Naive thymus-derived CD4-positive, alpha-beta T cell (primary cell): ENCODE measurements at regions of chr3 and their contacts with region 1.

Region 1: DNA sequence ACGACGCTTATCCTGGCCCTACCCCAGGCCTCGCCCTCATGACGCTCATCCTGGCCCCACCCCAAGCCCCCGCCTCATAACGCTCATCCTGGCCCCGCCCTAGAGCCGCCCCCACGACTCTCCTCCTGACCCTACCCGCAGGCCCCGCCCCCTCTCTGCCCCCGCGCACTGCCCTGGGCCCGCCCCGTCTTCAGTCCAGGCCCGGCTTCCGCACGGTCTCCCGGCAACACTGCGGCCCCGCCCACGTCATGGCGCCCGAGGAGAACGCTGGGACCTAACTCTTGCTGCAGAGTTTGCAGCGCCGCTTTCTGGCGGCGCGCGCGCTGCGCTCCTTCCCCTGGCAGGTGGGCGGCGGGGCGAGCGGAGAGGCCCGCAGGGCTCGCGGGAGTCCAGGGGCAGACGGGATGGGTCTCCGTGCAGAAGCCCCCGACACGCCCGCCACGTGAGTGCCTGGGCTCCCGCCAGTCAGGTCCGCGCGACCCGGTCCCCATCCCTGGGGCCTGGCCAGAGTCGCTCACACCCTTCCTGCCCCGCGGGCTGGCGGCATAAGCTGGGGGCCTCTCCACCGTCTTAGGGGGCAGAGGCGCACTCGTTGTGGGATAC is 52.5 kb upstream of the ROPN1B start:
- DNase-seq: peak in 6 of 9 donors; percentile 91 to 96 (median 94)
- ATAC-seq: peak; percentile 98
- H3K4me3 ChIP-seq: peak overlapping the region; percentile 75
- H3K4me3 Mint-ChIP-seq: peak overlapping the region; percentile 82 to 94 (median 91)
- H3K27ac ChIP-seq: peak overlapping the region; percentile 83
- H3K27ac Mint-ChIP-seq: peak overlapping the region; percentile 86 to 99 (median 94)
- H3K4me1 ChIP-seq: no peaks in the 10 kb centered on the region
- H3K4me1 Mint-ChIP-seq: peaks cover 6 to 18% (median 13%) of the 10 kb centered on the region in 7 donors
- H3K27me3 ChIP-seq: no peaks in the 10 kb centered on the region
- H3K27me3 Mint-ChIP-seq: no peaks in the 10 kb centered on the region

Region 2: DNA sequence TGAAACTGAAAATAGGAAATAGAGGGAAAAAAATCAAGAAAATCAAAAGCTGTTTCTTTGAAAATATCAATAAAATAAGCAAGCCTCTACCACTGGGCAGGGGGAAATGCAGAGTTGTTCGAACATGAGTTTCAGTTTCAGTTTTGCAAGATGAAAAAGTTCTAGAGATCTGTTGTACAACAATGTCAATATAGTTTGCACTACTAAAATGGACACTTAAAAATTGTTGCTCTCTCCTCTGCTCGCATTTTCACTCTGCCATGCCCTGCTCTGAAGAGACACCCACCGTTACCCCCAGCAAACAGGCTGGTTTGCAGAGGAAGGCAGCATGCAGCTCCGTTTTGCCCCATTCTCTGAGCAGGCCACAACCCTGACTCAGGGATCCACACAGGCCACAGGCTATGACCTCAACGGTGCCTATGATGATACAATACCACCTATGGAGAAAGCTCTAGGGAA is 605.8 kb before region 1 on chr3:
- CTCF ChIA-PET with region 1: no interaction called
- POLR2A ChIA-PET with region 1: no interaction called
- intact Hi-C with region 1: loop called in 1 of 2 experiments (anchors 5 kb)
- DNase-seq: peak; percentile 15 to 51 (median 41)
- ATAC-seq: peak; percentile 92
- H3K4me3 ChIP-seq: peak overlapping the region; percentile 52
- H3K4me3 Mint-ChIP-seq: peak overlapping the region; percentile 78 to 99 (median 94)
- H3K27ac ChIP-seq: peak overlapping the region; percentile 62
- H3K27ac Mint-ChIP-seq: peak overlapping the region; percentile 40 to 97 (median 90)
- H3K4me1 ChIP-seq: peaks cover 0 to 17% of the 10 kb centered on the region in 2 donors
- H3K4me1 Mint-ChIP-seq: peaks cover 28 to 82% (median 65%) of the 10 kb centered on the region in 7 donors
- H3K27me3 ChIP-seq: no peaks in the 10 kb centered on the region
- H3K27me3 Mint-ChIP-seq: no peaks in the 10 kb centered on the region

Region 3: DNA sequence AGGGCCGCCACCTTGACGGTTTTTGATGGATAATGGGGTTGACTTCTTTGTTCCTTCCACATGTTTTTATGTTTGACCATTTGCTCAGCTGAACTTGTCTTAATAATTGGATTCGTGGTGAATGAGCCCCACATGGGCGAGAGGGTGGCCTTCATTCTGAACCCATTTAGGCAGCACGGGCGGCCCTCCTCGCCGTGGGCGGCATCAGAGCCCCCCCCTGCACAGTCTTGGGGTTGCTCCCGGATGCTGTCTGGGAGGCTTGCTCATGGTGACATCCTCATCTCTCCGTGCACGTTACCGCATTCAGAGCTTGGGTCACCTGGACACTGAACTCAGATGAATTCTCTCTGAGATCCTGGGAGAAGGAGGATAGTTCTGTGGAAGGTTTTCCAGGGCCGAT is 148.8 kb before region 1 on chr3:
- CTCF ChIA-PET with region 1: no interaction called
- POLR2A ChIA-PET with region 1: no interaction called
- intact Hi-C with region 1: loop called (anchors 1 to 5 kb)
- DNase-seq: no peak
- ATAC-seq: no peak
- H3K4me3 ChIP-seq: no peak overlapping the region
- H3K4me3 Mint-ChIP-seq: peak overlapping the region; percentile 55 to 83 (median 73)
- H3K27ac ChIP-seq: no peak overlapping the region
- H3K27ac Mint-ChIP-seq: peak overlapping the region in 1 of 9 donors; percentile 21
- H3K4me1 ChIP-seq: no peaks in the 10 kb centered on the region
- H3K4me1 Mint-ChIP-seq: peaks cover 0 to 10% (median 5%) of the 10 kb centered on the region in 7 donors
- H3K27me3 ChIP-seq: no peaks in the 10 kb centered on the region
- H3K27me3 Mint-ChIP-seq: peaks cover 16 to 35% (median 21%) of the 10 kb centered on the region in 5 donors

Region 4: DNA sequence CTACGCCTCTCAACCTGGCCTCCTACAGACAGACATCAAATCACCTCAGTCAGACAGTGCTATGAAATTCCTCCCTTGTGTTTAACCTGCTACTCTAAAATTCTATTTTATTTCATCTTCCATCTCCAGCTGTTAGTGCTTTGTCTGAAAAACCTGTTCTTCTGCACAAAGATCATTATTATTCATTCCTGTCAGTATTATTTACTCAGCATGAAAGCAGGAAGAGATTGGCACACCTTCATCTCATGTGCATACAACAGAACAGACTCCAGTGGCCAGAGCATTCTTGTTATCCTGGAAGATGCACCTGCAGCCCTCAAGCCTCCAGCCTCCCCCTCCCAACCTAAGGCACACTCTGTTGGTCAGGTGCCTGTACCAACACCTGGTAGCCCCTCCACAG is 50.7 kb after region 1 on chr3:
- CTCF ChIA-PET with region 1: no interaction called
- POLR2A ChIA-PET with region 1: no interaction called
- intact Hi-C with region 1: no loop called
- DNase-seq: no peak
- ATAC-seq: no peak
- H3K4me3 ChIP-seq: no peak overlapping the region
- H3K4me3 Mint-ChIP-seq: no peak overlapping the region
- H3K27ac ChIP-seq: no peak overlapping the region
- H3K27ac Mint-ChIP-seq: no peak overlapping the region
- H3K4me1 ChIP-seq: peaks cover 2 to 5% of the 10 kb centered on the region in 2 donors
- H3K4me1 Mint-ChIP-seq: peaks cover 0 to 4% (median 4%) of the 10 kb centered on the region in 7 donors
- H3K27me3 ChIP-seq: peaks cover 3 to 6% of the 10 kb centered on the region in 2 donors
- H3K27me3 Mint-ChIP-seq: peaks cover 16 to 24% (median 22%) of the 10 kb centered on the region in 5 donors

Region 5: GRCh38 chr3:126197854-126198584 is 281.5 kb after region 1 on chr3:
- CTCF ChIA-PET with region 1: no interaction called
- POLR2A ChIA-PET with region 1: no interaction called
- intact Hi-C with region 1: loop called in 1 of 2 experiments (anchors 5 kb)
- DNase-seq: peak in 6 of 9 donors; percentile 1 to 34 (median 20)
- ATAC-seq: peak; percentile 73
- H3K4me3 ChIP-seq: no peak overlapping the region
- H3K4me3 Mint-ChIP-seq: no peak overlapping the region
- H3K27ac ChIP-seq: no peak overlapping the region
- H3K27ac Mint-ChIP-seq: no peak overlapping the region
- H3K4me1 ChIP-seq: no peaks in the 10 kb centered on the region
- H3K4me1 Mint-ChIP-seq: no peaks in the 10 kb centered on the region
- H3K27me3 ChIP-seq: no peaks in the 10 kb centered on the region
- H3K27me3 Mint-ChIP-seq: peaks cover 9 to 27% (median 15%) of the 10 kb centered on the region in 5 donors

Region 6: DNA sequence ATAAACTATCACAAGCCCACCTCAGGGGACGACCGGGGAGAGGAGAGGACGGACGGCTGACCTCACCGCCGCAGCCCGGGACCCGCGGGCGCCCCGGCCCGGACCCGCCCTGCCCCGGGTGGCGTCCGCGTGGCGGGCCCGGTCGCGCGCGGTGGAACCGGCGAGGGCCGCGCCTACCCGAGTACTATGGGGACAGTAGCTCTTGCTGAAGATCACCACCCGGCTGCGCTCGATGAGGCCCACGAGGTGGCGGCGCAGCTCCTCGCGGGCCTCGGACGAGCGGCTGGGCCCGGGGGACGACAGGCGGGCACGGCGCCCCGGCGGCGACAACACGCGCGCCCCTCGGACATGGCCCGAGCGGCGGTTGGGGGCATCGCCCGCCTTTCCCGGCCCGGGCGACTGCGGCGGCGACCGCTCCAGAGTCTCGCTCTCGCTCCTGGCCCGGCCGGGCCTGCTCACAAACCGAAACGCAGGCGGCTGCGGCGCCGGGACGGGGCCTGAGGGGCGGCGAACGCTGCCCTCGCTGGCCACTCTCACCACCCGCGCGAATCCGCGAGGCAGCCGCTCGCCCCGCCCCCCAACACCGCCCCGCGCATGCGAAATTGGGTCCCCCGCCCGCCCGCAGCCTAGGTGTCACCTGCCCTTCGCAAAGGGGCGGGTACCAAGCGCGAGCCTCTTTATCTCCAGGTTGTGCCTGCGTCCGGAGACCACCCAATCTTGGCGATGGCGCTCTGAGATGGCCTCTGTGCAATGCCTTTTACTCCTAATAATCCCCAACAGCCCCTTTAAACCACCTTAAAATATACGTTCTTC is 738.3 kb after region 1 on chr3 and contains the start of gene TXNRD3:
- CTCF ChIA-PET with region 1: no interaction called
- POLR2A ChIA-PET with region 1: no interaction called
- intact Hi-C with region 1: loop called in 1 of 2 experiments (anchors 2 kb)
- DNase-seq: peak; percentile 52 to 76 (median 71)
- ATAC-seq: peak; percentile 93
- H3K4me3 ChIP-seq: peak within 1 kb of the TSS; percentile 46
- H3K4me3 Mint-ChIP-seq: peak within 1 kb of the TSS; percentile 83 to 93 (median 89)
- H3K27ac ChIP-seq: peak within 1 kb of the TSS; percentile 51
- H3K27ac Mint-ChIP-seq: peak within 1 kb of the TSS in 7 of 9 donors; percentile 18 to 91 (median 51)
- H3K4me1 ChIP-seq: peaks cover 0 to 3% of the 10 kb centered on the region in 2 donors
- H3K4me1 Mint-ChIP-seq: peaks cover 4 to 19% (median 10%) of the 10 kb centered on the region in 7 donors
- H3K27me3 ChIP-seq: peaks cover 0 to 4% of the 10 kb centered on the region in 2 donors
- H3K27me3 Mint-ChIP-seq: peaks cover 0 to 51% (median 4%) of the 10 kb centered on the region in 5 donors
- total RNA-seq, gene TXNRD3: 0.46 to 4.8 (median 3.2) TPM

Region 7: DNA sequence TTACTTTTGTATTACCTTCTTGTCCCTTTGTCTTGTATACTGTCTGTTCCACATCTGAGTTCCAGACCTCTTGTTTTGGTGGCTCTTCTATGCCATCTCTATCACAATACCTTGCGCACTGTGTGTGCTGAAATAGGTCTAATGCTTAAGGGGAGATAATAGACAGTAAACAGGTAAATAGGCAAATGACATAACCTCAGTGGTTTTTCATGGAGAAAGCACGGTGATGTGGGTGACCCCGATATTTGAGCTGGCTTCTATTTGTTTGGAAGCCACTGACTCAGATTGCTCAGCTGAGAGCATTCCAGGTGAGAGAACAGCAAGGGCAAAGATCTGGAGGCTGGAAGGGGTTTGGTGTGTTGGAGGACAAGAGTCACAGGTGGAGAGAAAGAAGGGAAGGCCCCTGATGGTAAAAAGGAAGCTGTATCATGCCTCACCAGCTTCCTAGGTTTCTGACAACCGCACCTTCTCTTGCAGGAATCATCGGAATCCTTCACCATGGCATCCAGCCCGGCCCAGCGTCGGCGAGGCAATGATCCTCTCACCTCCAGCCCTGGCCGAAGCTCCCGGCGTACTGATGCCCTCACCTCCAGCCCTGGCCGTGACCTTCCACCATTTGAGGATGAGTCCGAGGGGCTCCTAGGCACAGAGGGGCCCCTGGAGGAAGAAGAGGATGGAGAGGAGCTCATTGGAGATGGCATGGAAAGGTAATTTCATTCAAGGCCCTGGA is 1682.5 kb after region 1 on chr3:
- CTCF ChIA-PET with region 1: no interaction called
- POLR2A ChIA-PET with region 1: no interaction called
- intact Hi-C with region 1: loop called in 1 of 2 experiments (anchors 5 kb)
- DNase-seq: no peak
- ATAC-seq: no peak
- H3K4me3 ChIP-seq: peak overlapping the region; percentile 75
- H3K4me3 Mint-ChIP-seq: peak overlapping the region; percentile 62 to 89 (median 82)
- H3K27ac ChIP-seq: peak overlapping the region; percentile 70
- H3K27ac Mint-ChIP-seq: peak overlapping the region; percentile 57 to 93 (median 86)
- H3K4me1 ChIP-seq: peaks cover 7% of the 10 kb centered on the region in 2 donors
- H3K4me1 Mint-ChIP-seq: peaks cover 13 to 57% (median 16%) of the 10 kb centered on the region in 7 donors
- H3K27me3 ChIP-seq: no peaks in the 10 kb centered on the region
- H3K27me3 Mint-ChIP-seq: no peaks in the 10 kb centered on the region